Heart right ventricle (tissue), 16 donors: ENCODE measurements at regions of chr2 and their contacts with region 1.

Region 1: DNA sequence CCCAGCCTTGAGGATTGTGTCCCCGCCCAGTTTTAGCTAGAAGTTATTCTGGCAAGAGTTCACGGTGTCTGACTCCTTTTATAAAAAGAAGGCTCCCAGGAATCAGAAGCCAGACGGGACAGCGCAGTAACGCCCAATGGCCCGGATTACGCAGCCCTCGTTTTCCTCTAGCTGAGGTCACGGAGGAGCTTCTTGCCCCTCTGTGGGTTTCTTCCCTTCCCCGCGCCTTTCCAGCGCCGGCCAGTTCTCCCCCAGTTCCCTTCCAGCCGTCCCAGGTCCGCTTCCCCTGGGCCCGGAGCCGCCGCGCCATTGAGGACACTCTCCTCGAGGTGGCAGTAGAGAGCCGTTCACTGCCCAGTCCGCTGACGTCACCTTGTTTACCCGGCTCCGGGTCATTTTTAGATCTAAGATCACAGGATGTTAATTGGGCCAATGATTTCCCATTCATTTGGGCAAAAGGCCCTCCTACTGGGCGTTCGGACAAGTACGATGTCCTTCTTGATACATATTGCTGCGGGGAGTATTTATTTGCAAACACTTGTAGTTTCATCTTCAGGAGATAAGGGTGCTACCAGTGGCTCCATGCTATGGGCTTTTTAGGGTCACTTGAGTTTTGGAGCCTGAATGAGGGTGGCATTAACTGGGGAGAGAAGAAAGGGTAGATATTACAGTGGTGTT is 81.5 kb upstream of the PPM1B start:
- DNase-seq: peak; percentile 86 to 90
- ATAC-seq: peak; percentile 93 to 98 (median 96)
- H3K4me3 ChIP-seq: peak overlapping the region in 9 of 10 donors; percentile 8 to 53 (median 41)
- H3K27ac ChIP-seq: peak overlapping the region in 8 of 10 donors; percentile 4 to 71 (median 63)
- H3K4me1 ChIP-seq: peaks cover 0 to 16% (median 11%) of the 10 kb centered on the region in 9 donors
- H3K27me3 ChIP-seq: no peaks in the 10 kb centered on the region
- CTCF ChIP-seq: peak; percentile 94 to 100 (median 98)

Region 2: DNA sequence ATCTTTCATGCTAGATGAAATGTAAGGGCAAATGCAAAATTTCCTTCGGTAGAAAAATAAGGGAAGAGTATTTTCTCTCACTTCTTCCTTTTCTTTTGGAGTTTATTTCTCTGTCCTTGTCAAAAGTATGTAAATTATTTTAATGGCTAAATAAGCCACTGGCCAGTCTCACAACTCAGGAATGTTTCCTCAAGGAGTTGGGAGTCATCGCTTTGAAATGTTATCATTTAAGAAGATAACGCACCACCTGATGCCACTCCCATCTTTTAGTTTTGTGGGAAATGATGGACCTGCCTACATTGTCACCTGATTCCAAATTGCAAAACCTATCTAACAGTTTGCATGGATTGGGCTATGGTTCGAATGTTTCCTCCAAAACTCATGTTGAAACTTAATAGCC is 49.0 kb after region 1 on chr2:
- intact Hi-C with region 1: no loop called
- DNase-seq: no peak
- ATAC-seq: no peak
- H3K4me3 ChIP-seq: no peak overlapping the region
- H3K27ac ChIP-seq: no peak overlapping the region
- H3K4me1 ChIP-seq: peaks cover 0 to 10% (median 2%) of the 10 kb centered on the region in 9 donors
- H3K27me3 ChIP-seq: no peaks in the 10 kb centered on the region
- CTCF ChIP-seq: no peak

Region 3: DNA sequence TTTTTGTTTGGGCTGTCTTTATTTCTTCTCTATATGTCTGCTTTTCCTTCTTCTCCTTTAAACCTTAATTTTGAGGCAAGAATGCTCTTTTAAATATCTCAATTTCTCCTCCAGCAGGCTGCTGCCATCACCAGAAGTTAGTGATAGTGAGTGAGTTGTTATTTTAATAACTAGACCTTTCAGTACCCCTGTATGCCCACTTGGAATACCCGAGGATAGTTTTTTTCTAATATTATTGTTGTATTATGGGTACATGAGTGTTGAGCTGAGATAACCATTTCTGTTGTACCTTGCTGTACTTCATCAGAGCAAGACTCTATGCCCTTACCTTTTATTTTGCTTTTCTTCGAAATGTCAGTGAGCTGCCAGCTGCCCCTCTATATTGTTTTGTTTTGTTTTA is 131.6 kb after region 1 on chr2:
- intact Hi-C with region 1: loop called in 1 of 10 experiments (anchors 5 kb)
- DNase-seq: no peak
- ATAC-seq: no peak
- H3K4me3 ChIP-seq: no peak overlapping the region
- H3K27ac ChIP-seq: no peak overlapping the region
- H3K4me1 ChIP-seq: no peaks in the 10 kb centered on the region
- H3K27me3 ChIP-seq: no peaks in the 10 kb centered on the region
- CTCF ChIP-seq: no peak

Region 4: GRCh38 chr2:44244129-44244871 is 157.1 kb after region 1 on chr2:
- intact Hi-C with region 1: loop called in 6 of 10 experiments (anchors 2 to 10 kb)
- DNase-seq: peak in 1 of 2 donors; percentile 62
- ATAC-seq: peak in 7 of 8 donors; percentile 65 to 82 (median 76)
- H3K4me3 ChIP-seq: peak overlapping the region in 9 of 10 donors; percentile 5 to 55 (median 47)
- H3K27ac ChIP-seq: no peak overlapping the region
- H3K4me1 ChIP-seq: peaks cover 0 to 16% (median 6%) of the 10 kb centered on the region in 9 donors
- H3K27me3 ChIP-seq: no peaks in the 10 kb centered on the region
- CTCF ChIP-seq: peak; percentile 44 to 80 (median 68)

Region 5: DNA sequence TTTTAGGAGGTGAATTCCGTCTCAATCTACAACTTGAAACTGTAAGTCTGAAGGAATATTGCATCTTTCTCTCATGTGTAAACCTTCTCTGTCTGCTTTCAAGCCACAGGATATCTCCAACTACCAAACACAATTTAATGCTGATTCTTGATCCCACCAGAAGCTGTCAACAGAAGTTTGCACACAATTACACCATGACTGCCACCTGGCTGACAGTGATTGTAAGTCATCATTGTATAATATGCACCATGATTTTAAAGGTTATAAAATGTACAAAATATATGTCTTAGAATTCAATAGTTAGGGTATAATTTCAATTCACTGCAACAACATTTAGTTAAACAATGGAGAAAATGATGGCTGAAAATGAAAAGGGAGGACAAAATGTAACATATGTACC is 255.7 kb after region 1 on chr2:
- intact Hi-C with region 1: loop called in 1 of 10 experiments (anchors 10 kb)
- DNase-seq: no peak
- ATAC-seq: peak in 1 of 8 donors; percentile 51
- H3K4me3 ChIP-seq: no peak overlapping the region
- H3K27ac ChIP-seq: no peak overlapping the region
- H3K4me1 ChIP-seq: peaks cover 0 to 11% (median 8%) of the 10 kb centered on the region in 9 donors
- H3K27me3 ChIP-seq: no peaks in the 10 kb centered on the region
- CTCF ChIP-seq: peak in 7 of 9 donors; percentile 17 to 55 (median 39)

Region 6: GRCh38 chr2:44955593-44956392 is 868.6 kb after region 1 on chr2:
- intact Hi-C with region 1: loop called in 1 of 10 experiments (anchors 5 kb)
- DNase-seq: peak; percentile 61 to 79
- ATAC-seq: peak; percentile 72 to 91 (median 84)
- H3K4me3 ChIP-seq: peak overlapping the region in 9 of 10 donors; percentile 13 to 49 (median 38)
- H3K27ac ChIP-seq: no peak overlapping the region
- H3K4me1 ChIP-seq: peaks cover 15 to 37% (median 29%) of the 10 kb centered on the region in 9 donors
- H3K27me3 ChIP-seq: peaks cover 14 to 98% (median 80%) of the 10 kb centered on the region in 7 donors
- CTCF ChIP-seq: peak; percentile 62 to 95 (median 91)